GM18951 (cell line): ENCODE measurements at regions of chr1 and their contacts with region 1.

Region 1: GRCh38 chr1:65734979-65735378 is 57.7 kb upstream of the PDE4B start:
- POLR2A ChIP-seq: no peak

Region 2: DNA sequence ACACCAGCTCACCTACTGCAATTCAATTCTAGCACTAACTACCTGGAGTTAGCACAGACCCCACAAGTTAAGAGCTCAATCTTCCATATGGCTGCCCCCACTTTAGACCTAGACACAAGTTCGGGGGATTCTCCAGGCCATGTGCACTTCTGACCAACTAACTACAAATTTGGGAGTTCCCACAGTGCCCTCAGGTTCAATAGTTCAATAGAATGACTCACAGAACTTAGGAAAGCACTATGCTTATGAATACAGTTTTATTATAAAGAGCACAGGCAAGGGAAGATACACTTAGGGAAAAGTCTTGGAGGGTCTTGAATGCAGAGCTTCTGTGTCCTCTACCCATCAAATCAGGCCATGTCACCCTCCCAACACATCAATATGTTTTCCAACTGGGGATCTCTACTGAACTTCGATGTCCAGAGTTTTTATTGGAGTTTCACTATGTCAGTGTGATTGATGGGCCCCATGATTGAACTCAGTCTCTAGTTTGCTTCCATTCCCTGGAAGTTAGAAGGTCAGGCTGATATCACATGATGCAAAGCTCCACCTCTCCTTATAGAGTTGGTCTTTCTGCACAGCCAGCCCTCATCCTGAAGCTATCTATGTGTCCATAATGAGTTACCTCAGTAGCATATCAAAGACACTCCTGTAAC is 944.0 kb before region 1 on chr1:
- in situ Hi-C with region 1: no loop called
- POLR2A ChIP-seq: no peak

Region 3: GRCh38 chr1:66464802-66465201 is 729.8 kb after region 1 on chr1:
- in situ Hi-C with region 1: loop called (anchors 25 kb)
- POLR2A ChIP-seq: no peak